Psoas muscle (tissue), 8 donors: ENCODE measurements at regions of chr10 and their contacts with region 1.

Region 1: DNA sequence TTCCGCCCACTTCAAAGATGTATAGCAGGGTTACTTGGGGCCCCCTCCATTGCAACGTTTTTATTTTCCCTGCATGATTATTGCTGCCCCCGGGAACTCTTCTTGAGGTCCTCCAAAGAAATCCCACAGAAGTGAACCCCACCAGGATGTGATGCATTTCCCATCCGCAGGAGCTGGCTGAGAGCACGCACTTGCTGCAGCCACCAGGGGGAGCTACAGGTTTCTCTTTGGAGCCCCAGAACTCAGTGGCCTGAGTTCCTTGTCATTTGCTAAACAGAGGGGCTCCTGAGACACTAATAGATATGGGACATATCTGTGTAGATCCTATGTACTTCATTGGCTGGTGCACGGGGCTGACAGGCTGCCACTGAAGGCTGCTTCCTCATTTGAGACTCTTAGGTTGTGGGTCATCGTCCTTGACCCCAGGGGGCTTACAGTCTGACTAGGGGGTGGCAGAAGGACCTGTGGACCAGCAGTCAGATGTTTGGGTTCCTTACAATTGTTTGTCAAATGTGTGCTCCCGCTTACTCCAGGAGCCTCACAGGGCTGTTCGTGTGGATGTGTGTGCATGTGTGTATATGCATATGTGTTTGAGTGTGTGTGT is 52.3 kb upstream of the ENO4 start:
- DNase-seq: peak; percentile 65 to 76
- ATAC-seq: peak; percentile 49 to 63 (median 58)
- H3K4me3 ChIP-seq: no peak overlapping the region
- H3K27ac ChIP-seq: no peak overlapping the region
- H3K4me1 ChIP-seq: no peaks in the 10 kb centered on the region
- H3K27me3 ChIP-seq: peaks cover 0 to 6% (median 0%) of the 10 kb centered on the region in 3 donors
- CTCF ChIP-seq: peak; percentile 74

Region 2: GRCh38 chr10:116721547-116722392 is 75.2 kb before region 1 on chr10:
- intact Hi-C with region 1: no loop called
- DNase-seq: no peak
- ATAC-seq: no peak
- H3K4me3 ChIP-seq: no peak overlapping the region
- H3K27ac ChIP-seq: no peak overlapping the region
- H3K4me1 ChIP-seq: no peaks in the 10 kb centered on the region
- H3K27me3 ChIP-seq: no peaks in the 10 kb centered on the region
- CTCF ChIP-seq: no peak

Region 3: DNA sequence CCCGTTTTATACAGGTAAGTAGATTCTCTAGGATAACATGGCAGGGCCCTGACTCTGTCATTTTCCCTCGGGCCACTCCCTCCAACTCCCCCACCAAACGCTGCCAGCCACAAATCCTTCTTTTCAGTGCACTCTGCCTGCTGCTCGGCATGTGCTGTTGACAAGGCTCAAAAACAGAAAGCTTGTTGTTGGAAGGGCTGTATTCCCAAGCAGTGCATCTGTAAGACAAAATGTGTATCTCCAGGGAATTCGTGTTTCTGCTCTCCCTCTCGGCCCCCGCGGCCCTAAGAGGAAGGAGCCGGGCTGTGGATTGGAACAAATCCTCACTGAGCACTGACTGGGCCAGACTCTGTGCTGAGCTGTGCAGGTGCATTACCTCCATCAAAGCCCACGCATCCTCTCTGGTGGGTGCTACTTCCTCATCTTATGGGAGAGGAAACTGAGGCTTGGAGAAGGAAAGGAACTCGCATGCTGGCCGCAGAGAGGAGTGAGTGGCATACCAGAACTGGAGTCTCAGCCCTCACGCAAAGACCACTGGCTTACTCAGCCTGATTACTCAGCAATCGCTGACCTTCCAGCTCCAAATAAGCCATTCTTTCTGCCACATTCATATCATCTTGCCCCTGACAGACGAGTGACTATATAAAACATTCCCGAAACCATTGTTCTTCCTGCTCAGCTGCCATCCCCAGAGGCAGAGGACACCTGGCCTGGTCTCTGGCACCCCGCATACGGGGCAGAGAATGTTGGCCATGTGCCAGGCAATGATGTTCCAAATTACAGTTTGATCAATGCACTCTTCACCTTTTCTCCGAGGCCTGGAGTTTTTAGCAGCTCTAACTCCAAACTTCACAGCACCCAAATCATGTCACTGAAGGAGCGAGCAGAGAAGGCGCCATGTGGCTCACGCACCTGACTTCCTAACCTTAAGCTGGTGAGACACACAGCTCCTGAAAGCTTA is 18.9 kb after region 1 on chr10:
- intact Hi-C with region 1: no loop called
- DNase-seq: no peak
- ATAC-seq: no peak
- H3K4me3 ChIP-seq: no peak overlapping the region
- H3K27ac ChIP-seq: no peak overlapping the region
- H3K4me1 ChIP-seq: no peaks in the 10 kb centered on the region
- H3K27me3 ChIP-seq: peaks cover 0 to 4% (median 4%) of the 10 kb centered on the region in 3 donors
- CTCF ChIP-seq: no peak

Region 4: DNA sequence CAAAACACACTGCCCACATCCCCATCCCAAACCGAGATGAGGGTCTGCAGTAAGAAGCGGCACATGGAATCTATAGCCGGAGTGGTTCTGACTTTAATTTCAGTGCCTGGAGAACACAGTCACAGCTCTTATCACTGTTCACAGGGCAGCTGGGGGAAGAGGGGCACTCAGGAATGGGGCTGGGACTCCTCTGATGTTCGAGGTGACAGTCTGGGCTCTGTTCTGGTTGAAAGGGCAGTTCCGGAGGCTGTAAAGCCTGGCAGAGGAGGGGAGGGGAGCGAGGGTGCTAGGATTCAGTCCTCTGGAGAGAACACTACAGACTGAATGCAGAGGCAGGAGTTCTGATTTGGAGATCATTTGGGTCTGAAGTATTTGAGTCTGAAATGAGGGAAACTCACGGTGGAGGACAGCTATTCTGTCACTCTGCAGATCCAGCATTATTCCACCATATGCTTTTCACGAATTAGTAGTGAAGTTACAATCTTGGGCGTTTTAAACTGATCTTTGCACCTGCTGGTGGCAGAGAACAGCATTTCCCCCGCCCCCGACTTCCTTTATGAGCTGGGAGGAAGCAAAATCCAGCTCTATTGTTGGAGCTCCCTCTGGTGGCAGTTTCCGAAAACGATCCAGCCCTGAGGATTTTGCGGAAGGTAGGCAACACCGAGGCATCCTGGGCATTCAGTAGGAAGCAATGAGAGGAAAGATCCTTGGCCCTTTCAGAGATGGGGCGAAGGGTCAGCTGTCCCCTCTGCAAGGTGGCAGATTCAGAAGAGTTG is 377.6 kb after region 1 on chr10:
- intact Hi-C with region 1: loop called (anchors 1 to 2 kb)
- DNase-seq: peak; percentile 58 to 66
- ATAC-seq: peak; percentile 67 to 90 (median 78)
- H3K4me3 ChIP-seq: peak overlapping the region; percentile 50
- H3K27ac ChIP-seq: no peak overlapping the region
- H3K4me1 ChIP-seq: peaks cover 10% of the 10 kb centered on the region
- H3K27me3 ChIP-seq: peaks cover 0 to 75% (median 10%) of the 10 kb centered on the region in 3 donors
- CTCF ChIP-seq: peak; percentile 67